PC-3 (cell line): ENCODE measurements at regions of chr21 and their contacts with region 1.

Region 1: DNA sequence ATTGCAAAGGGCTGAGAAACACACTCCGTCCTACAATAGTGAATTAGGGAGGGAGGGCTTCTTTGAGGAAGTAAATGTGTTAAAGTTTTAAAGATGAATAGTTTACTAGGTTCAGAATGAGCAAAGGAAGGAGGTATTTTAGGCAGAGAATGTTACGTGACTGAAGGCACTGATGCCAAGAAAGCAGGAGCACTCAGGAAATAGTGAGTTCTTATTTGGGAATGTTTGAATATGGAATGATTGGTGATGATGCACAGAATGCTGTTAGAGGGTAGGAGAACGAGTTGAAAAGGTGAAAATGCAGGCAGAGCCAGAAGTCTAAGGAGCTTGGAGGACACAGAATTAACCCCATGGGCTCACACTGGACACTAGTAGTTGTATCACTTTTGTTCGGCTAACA is 108.0 kb downstream of the NRIP1 start:
- DNase-seq: peak; percentile 87
- ATAC-seq: peak; percentile 78
- H3K4me3 ChIP-seq: no peak overlapping the region
- H3K27ac ChIP-seq: peak overlapping the region; percentile 65
- H3K4me1 ChIP-seq: peaks cover 41% of the 10 kb centered on the region
- H3K27me3 ChIP-seq: no peaks in the 10 kb centered on the region
- CTCF ChIP-seq: no peak

Region 2: DNA sequence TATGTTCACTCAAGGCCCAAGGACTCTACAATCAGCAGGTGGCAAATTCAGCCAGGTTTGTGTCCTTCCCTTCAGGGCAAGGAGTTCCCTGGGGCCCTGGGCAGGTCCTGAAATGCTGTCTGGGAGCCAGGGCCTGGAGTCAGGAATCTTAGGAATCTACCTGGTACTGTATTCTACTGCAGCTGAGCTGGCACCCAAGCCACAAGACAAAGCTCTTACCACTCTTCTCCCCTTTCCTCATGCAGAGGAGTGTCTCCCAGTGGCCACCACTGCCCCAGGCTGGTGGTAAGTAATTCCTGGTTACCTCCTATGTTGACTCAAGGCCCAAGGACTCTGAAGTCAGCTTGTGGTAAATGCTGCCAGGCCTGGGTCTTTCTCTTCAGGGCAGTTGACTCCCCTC is 45.5 kb before region 1 on chr21:
- CTCF ChIA-PET with region 1: no interaction called
- POLR2A ChIA-PET with region 1: no interaction called
- intact Hi-C with region 1: no loop called
- DNase-seq: peak; percentile 74
- ATAC-seq: peak; percentile 35
- H3K4me3 ChIP-seq: no peak overlapping the region
- H3K27ac ChIP-seq: peak overlapping the region; percentile 22
- H3K4me1 ChIP-seq: peaks cover 38% of the 10 kb centered on the region
- H3K27me3 ChIP-seq: no peaks in the 10 kb centered on the region
- CTCF ChIP-seq: no peak

Region 3: DNA sequence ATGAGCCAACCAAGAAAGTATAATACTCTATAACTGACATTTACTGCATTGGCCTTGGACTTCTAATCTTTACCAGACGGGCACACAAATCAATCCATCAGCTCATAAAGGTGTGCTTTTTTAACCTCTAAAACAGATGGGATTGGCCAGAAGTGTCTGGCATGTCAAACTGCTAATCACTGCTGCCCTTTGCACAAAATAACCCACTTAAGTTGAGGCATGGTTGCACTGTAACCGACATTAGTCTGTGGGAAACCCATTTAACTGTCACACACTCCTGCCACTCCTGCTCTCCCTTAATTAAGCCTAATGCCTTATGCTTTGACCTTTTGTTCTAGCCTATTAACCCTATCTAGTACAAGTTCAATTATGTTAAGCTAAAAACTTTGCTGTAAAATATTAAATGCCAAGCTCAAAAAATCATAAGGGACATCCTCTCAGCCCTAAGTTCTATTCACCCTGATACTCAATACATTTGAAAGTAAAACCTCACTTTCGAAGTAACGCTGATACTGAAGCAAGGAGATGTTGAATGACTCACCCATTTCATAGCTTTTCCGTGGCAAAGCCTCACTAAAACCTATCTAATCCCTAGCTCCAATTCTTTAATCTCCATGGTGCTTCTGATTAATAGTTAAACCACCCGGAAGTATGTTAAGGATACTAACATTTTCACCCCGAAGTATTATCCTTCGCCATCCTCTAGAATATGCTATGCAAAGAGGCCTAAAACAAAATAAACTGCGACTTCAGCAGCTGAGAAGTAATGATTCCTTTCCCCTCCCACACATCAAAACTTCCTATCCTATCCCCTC is 95.0 kb after region 1 on chr21:
- CTCF ChIA-PET with region 1: no interaction called
- POLR2A ChIA-PET with region 1: no interaction called
- intact Hi-C with region 1: loop called (anchors 5 kb)
- DNase-seq: peak; percentile 61
- ATAC-seq: peak; percentile 43
- H3K4me3 ChIP-seq: peak overlapping the region; percentile 59
- H3K27ac ChIP-seq: peak overlapping the region; percentile 36
- H3K4me1 ChIP-seq: peaks cover 58% of the 10 kb centered on the region
- H3K27me3 ChIP-seq: no peaks in the 10 kb centered on the region
- CTCF ChIP-seq: no peak

Region 4: DNA sequence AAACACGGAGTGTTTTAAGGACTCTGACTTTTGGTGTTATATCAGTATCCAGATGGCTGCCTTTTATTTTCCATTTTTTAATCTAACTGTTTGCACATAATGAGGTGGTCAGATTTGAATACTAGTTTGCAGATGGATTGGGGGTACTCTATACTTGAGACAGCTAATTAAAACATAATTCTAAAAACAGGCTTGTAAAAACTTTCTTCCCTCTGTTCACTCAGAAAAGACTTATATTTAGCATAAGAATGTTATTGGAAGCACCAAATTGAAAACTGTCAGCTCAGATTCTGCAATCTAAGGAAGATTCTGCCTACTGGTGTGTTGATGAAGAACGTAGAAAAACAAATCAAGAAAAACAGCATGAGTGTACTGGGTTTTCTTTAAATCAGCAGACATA is 152.0 kb after region 1 on chr21:
- CTCF ChIA-PET with region 1: no interaction called
- POLR2A ChIA-PET with region 1: no interaction called
- intact Hi-C with region 1: no loop called
- DNase-seq: no peak
- ATAC-seq: no peak
- H3K4me3 ChIP-seq: no peak overlapping the region
- H3K27ac ChIP-seq: no peak overlapping the region
- H3K4me1 ChIP-seq: no peaks in the 10 kb centered on the region
- H3K27me3 ChIP-seq: no peaks in the 10 kb centered on the region
- CTCF ChIP-seq: no peak